SK-N-SH (cell line): ENCODE measurements at regions of chr11 and their contacts with region 1.

Region 1: DNA sequence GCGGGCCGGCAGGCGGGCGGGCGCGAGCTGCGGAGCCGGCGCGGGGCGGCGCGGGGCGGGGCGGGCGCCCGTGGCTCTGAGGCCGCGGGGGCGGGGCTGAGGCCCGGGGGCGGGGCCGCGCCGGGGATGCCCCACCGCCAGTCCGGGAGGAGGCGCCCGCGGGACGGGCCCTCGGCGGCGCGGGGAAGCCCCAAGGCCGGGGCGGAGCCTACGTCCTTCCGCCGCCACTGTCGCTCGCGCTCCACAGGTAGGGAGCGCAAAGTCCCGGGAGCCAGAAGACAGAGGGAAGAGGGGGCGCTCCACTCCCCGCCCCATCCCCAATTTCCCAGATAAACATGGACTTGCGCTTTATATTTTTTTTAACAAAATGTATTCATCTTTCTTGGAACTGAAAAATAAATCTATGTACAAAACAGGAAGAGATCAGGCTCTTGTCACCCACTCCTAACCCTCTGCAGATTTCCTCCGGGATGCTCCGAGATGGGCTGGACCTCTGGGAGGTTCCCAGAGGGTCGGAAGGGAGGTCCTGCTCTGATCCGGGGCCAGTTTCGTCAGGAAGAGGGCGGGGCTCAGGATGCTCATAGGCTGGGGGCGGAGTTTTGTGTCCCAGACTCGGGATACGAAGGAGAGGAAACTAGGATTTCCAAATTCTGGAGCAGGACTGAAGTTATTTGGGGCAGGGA is at the start of gene MAP4K2:
- DNase-seq: peak; percentile 98
- H3K4me3 ChIP-seq: peak within 1 kb of the TSS; percentile 69 to 78
- H3K27ac ChIP-seq: peak within 1 kb of the TSS; percentile 89 to 90
- H3K4me1 ChIP-seq: peaks cover 7 to 20% of the 10 kb centered on the region in 2 experiments; a peak in 2 of 4 replicates
- H3K27me3 ChIP-seq: no peaks in the 10 kb centered on the region
- CTCF ChIP-seq: peak; percentile 38
- EP300 ChIP-seq: no peak
- RAD21 ChIP-seq: no peak
- polyA plus RNA-seq, gene MAP4K2: 17.4 and 20.0 TPM in 2 replicates

Region 2: GRCh38 chr11:64787526-64788320 is 15.6 kb before region 1 on chr11:
- CTCF ChIA-PET with region 1: interaction called, 20 read pairs
- POLR2A ChIA-PET with region 1: no interaction called
- DNase-seq: peak; percentile 82
- H3K4me3 ChIP-seq: no peak overlapping the region; a peak in 1 of 4 replicates
- H3K27ac ChIP-seq: no peak overlapping the region; a peak in 1 of 4 replicates
- H3K4me1 ChIP-seq: no peaks in the 10 kb centered on the region
- H3K27me3 ChIP-seq: no peaks in the 10 kb centered on the region
- CTCF ChIP-seq: peak; percentile 80
- EP300 ChIP-seq: no peak
- RAD21 ChIP-seq: peak; percentile 57